Activated CD8-positive, alpha-beta T cell treated with anti-CD3 and anti-CD28 coated beads, Interleukin-2, amount 10 ng/mL, durations not matched to agents 7 days and 5 days (primary cell): ENCODE measurements at regions of chr2 and their contacts with region 1.

Region 1: GRCh38 chr2:73926493-73927338 is at the start of gene DGUOK:
- DNase-seq: peak; percentile 99
- ATAC-seq: peak; percentile 98
- H3K4me3 Mint-ChIP-seq: peak within 1 kb of the TSS; percentile 94
- H3K27ac Mint-ChIP-seq: peak within 1 kb of the TSS; percentile 97
- H3K4me1 Mint-ChIP-seq: peaks cover 73% of the 10 kb centered on the region
- H3K27me3 Mint-ChIP-seq: no peaks in the 10 kb centered on the region
- total RNA-seq, gene DGUOK: 71.5 to 72.1 TPM

Region 2: DNA sequence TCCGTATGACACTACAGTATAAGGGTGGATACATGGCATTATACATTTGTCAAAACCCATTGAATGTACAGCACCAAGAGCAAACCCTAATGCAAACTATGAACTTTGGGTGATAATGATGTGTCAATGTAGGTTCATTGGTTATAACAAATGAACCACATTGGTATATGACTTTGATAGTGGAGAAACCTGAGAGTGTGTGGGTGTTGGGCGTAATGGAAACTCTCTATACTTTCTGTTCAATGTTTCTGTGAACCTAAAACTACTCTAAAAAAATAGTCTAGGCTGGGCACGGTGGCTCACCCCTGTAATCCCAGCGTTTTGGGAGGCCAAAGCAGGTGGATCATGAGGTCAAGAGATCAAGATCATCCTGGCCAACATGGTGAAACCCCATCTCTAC is 40.4 kb before region 1 on chr2:
- CTCF ChIA-PET with region 1: no interaction called
- POLR2A ChIA-PET with region 1: no interaction called
- DNase-seq: no peak
- ATAC-seq: peak; percentile 19
- H3K4me3 Mint-ChIP-seq: no peak overlapping the region
- H3K27ac Mint-ChIP-seq: no peak overlapping the region
- H3K4me1 Mint-ChIP-seq: peaks cover 17% of the 10 kb centered on the region
- H3K27me3 Mint-ChIP-seq: peaks cover 4% of the 10 kb centered on the region

Region 3: DNA sequence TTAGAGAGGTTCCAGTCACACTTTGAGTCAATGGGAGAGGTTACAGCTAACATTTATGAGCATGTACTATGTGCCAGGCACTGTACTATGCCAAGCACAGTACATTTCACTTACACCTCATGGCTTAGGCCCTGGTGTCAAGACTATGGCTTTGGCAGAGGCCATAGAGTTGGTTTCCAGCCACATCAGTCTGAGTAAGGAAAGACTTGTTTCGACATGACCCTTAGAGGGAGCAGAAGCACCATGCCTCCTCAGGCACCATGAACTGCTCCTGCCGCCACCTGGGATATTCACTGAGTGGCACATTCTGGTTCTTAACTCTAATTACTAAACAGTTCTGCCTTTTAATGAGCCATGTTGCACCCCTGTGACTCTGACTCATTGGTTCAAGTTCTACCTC is 12.7 kb after region 1 on chr2:
- CTCF ChIA-PET with region 1: interaction called, 4 read pairs
- POLR2A ChIA-PET with region 1: interaction called, 12 read pairs
- DNase-seq: peak; percentile 35
- ATAC-seq: peak; percentile 63
- H3K4me3 Mint-ChIP-seq: no peak overlapping the region
- H3K27ac Mint-ChIP-seq: no peak overlapping the region
- H3K4me1 Mint-ChIP-seq: peaks cover 48% of the 10 kb centered on the region
- H3K27me3 Mint-ChIP-seq: no peaks in the 10 kb centered on the region

Region 4: DNA sequence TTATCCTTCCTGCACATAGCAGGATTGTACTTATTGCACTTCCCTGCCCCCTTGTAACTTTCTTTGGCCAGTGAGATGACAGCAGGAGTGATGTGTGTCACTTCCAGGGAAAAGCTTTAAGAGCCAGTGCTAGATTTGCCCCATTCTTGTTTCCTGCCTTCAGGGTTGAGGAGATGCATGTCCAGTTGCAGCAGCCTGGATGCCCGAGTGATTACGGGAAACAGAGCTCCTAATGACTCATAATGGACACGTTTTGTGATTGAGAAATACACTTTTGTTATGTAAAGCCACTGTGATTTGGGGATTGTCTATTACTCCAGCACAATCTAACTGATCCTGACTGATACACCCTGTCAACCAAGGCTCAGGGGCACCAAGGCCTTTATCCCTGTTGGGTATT is 53.0 kb after region 1 on chr2:
- CTCF ChIA-PET with region 1: interaction called, 3 read pairs
- POLR2A ChIA-PET with region 1: interaction called, 15 read pairs
- DNase-seq: no peak
- ATAC-seq: no peak
- H3K4me3 Mint-ChIP-seq: peak overlapping the region; percentile 30
- H3K27ac Mint-ChIP-seq: peak overlapping the region; percentile 84
- H3K4me1 Mint-ChIP-seq: peaks cover 82% of the 10 kb centered on the region
- H3K27me3 Mint-ChIP-seq: peaks cover 6% of the 10 kb centered on the region